Right ventricle myocardium inferior (tissue), 1 donor: ENCODE measurements at regions of chr15 and their contacts with region 1.

Region 1: DNA sequence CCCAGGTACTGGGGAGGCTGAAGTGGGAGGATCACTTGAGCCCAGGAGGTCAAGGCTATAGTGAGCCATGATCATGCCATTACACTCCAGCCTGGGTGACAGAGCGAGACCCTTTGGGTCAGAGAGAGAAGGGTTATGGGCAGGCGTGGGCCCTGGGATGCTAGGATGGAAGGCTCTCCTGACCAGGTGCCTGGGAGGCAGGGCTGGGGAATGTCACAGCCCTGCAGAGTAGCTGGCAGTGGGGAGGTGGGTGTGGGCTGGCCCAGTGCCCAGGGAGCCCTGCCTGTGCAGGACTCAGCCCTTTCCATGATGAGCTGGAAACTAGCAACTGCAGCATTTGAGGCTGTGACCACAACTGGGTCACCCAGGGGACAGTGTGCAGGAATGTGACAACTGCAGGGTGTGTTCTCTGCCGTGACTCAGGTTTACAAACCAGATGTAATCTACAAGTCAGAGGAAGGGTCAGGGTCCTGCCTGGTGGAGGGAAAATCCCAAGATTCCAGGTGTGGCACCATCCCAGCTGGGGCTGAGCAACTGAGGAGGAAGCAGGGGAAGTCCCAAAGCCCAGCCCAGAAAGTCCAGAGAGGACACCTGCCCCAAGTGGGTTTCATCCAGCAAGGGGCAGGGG is 45.4 kb downstream of the SLC28A1 start:
- DNase-seq: no peak
- ATAC-seq: no peak

Region 2: DNA sequence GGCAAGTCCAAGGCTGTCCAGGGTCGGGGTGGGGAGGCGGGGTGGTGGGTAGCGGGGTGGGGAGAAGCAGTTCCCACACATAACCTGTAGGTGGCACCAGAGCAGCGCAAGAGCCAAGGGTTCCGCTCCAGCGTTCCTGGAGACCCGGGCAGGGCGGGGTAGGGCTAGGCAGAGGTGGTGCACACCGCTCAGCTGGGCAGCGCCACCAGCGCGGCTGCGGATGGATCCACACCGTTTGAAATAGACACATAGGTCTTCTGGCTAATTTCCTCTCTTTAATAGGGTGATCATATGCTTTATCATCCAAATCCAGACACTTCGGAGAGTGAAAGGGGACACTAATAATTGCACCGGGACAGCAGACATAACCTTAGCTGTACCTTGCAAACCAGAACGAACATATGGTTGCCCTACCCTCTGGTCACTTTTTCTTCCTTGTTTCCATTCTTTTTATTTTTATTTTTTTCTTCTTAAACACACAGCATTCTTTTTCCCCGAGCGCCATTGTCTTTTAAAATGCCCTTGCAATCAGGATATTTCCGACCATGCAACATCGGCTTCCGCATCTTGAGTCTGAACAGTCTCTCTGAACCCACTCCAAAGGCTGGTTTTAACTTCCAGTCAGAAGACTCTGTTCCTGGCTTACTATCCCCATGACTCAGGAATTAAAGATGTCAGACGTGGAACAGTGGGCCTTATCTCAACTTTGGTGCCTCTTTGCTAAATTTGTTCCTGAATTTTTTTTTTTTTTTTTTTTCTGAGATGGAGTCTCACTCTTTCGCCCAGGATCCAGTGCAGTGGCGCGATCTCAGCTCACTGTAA is 341.6 kb before region 1 on chr15:
- intact Hi-C with region 1: loop called (anchors 5 kb)
- DNase-seq: peak; percentile 93
- ATAC-seq: peak; percentile 99

Region 3: GRCh38 chr15:84658080-84658787 is 271.6 kb before region 1 on chr15 and contains the start of gene NMB:
- intact Hi-C with region 1: loop called (anchors 2 kb)
- DNase-seq: peak; percentile 88
- ATAC-seq: peak; percentile 65
- total RNA-seq, gene NMB: 3.9 TPM

Region 4: DNA sequence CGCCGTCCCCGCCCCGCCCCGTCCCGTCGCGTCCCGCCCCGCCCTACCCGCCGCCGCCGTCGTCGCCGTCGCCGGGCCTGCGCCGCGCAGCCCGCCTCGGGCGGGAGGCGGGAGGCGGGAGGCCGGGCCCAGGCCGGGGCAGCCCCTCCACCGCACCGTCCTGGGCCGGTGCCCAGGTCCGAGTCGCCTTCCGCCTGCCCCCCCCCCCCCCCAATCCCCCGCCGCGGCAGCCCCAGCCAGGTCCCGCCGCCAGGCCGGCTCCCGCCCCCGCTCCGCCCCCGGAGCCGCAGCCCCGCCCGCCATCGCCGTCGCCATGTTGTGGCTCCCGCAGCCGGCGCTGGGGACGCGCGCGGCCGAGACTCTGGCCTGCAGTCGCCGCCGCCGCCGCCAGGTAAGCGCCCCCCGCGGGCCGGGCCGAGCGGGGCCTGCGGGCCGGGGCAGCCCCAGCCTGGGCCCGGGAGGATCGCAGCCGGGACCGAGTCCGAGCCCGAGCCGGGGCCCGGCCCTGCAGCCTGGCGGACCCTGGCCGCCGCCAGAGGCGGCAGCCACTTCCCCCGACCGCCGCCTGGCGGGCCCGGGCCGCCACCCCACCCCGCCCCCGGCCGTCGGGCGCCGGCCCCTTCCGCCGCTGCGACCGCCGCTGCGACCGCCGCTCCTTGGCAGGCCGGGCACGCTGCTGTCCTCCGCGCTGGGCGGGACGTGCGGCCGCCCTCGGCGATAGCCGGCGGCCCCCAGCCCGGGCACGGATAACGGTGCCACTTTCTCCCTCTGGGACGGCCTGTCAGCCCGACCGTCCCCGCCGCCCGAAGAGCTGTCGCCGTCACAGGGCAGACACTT is 181.4 kb before region 1 on chr15 and contains the start of gene ZNF592:
- intact Hi-C with region 1: loop called (anchors 2 kb)
- DNase-seq: peak; percentile 92
- ATAC-seq: peak; percentile 85
- total RNA-seq, gene ZNF592: 19.2 TPM

Region 5: DNA sequence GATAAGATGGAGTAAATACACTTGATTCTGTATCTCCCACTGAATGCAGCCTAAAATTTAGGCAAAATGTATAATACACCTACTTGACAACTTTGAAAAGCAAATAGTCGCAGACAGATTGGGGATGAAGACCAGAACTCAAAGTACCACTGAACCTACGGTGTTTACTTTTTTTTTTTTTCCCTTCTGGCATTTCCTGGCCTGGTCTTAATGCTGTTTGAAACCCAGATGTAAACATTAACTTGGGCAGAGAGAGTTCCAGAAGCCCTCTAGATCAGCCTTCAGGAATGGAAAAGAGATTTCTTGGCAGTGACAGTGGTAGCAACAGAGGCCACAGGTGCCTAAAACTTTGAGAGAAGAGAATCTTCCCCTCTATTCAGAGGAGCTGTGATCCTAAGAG is 84.9 kb before region 1 on chr15:
- intact Hi-C with region 1: loop called (anchors 5 kb)
- DNase-seq: no peak
- ATAC-seq: no peak